Naive thymus-derived CD4-positive, alpha-beta T cell (primary cell): ENCODE measurements at regions of chr3 and their contacts with region 1.

Region 1: DNA sequence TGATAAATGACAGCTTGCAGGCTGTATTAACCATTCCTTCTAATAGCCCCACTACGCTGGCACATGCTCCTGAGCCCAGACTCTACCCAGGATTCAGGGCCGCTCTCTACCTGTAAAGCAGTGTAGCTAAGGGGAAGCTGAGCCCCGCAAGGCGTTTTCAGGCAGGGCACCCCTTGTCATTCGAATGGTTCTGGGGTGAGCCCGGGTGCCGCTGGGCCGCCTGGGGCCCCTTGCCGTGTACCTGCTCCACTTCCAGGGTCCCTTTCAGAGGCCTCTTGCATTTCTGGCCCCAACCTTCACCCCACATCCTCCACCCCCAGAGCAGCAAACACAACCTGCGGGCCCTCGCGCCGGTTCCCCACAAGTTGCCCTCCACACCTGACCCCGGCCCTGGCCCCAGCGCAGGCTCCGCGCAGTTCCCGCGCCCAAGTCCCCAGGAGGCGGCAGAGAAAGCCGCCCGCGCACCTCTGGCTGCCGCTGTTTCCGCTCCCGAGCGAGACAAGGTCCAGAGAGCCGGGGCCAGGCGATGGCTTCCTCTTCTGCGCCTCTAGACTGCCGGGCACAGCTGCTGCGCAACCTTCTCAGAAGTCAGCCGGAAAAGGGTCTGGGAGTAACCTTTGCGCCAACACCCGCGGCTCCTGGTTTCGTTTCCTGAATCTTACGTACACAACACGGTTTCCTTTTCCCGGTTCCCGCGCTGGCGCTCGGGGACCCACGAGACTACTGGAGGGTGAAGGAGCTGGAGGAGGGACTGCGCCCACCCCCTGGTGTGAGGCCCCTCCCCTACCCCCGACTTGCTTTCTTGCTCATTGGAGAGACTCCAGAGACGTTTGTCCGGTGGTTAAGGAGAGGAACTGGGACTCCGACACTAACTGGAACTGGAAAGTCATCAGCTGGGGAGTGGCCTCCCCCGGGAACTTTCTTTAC is at the start of gene PLSCR1:
- DNase-seq: peak; percentile 40 to 77 (median 55)
- ATAC-seq: peak; percentile 86
- H3K4me3 ChIP-seq: peak within 1 kb of the TSS; percentile 82
- H3K4me3 Mint-ChIP-seq: peak within 1 kb of the TSS; percentile 91 to 98 (median 93)
- H3K27ac ChIP-seq: peak within 1 kb of the TSS; percentile 68
- H3K27ac Mint-ChIP-seq: peak within 1 kb of the TSS; percentile 29 to 97 (median 86)
- H3K4me1 ChIP-seq: peaks cover 12 to 28% of the 10 kb centered on the region in 2 donors
- H3K4me1 Mint-ChIP-seq: peaks cover 36 to 73% (median 57%) of the 10 kb centered on the region in 7 donors
- H3K27me3 ChIP-seq: no peaks in the 10 kb centered on the region
- H3K27me3 Mint-ChIP-seq: no peaks in the 10 kb centered on the region
- total RNA-seq, gene PLSCR1: 14.6 to 174 (median 16.1) TPM

Region 2: DNA sequence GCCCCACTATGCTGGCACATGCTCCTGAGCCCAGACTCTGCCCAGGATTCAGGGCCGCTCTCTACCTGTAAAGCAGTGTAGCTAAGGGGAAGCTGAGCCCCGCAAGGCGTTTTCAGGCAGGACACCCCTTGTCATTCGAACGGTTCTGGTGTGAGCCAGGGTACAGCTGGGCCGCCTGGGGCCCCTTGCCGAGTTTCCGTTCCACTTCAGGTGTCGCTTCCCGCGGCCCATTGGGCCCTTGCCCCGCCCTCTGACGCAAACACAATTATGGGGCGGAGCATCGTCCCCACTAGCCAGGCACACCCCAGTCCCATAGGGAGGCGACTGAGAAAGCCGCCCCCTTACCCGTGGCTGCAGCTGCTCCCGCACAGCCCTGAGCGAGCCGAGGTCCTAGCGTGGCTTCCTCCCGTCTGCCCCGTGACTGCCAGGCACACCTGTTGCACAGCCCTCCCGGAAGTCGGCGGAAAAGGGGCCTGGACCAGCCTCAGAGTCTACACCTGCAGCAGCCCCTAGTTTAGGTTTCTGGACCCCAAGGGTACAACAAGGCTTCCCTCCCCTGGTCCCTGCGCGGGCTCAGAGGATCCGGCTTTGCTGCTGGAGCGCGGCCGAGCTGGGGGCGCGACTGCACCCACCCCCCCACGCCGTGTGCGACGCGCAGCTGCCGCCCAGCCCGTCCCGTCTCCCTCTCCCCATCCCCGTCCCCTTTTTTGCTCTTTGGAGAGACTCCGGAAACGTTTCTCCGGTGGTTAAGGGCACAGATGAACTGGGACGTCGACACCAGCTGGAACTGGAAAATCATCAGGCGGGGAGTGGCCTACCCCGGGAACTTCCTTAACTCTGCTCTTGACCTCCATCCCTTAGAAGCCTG is 74.9 kb before region 1 on chr3 and contains the start of gene PLSCR2:
- CTCF ChIA-PET with region 1: no interaction called
- POLR2A ChIA-PET with region 1: interaction called, 3 read pairs
- intact Hi-C with region 1: loop called (anchors 1 to 2 kb)
- DNase-seq: peak; percentile 56 to 79 (median 74)
- ATAC-seq: peak; percentile 97
- H3K4me3 ChIP-seq: peak within 1 kb of the TSS; percentile 73
- H3K4me3 Mint-ChIP-seq: peak within 1 kb of the TSS; percentile 75 to 88 (median 82)
- H3K27ac ChIP-seq: peak within 1 kb of the TSS; percentile 69
- H3K27ac Mint-ChIP-seq: peak within 1 kb of the TSS; percentile 60 to 88 (median 81)
- H3K4me1 ChIP-seq: no peaks in the 10 kb centered on the region
- H3K4me1 Mint-ChIP-seq: peaks cover 0 to 18% (median 4%) of the 10 kb centered on the region in 7 donors
- H3K27me3 ChIP-seq: no peaks in the 10 kb centered on the region
- H3K27me3 Mint-ChIP-seq: peaks cover 0 to 9% (median 5%) of the 10 kb centered on the region in 5 donors
- total RNA-seq, gene PLSCR2: 0.44 to 0.89 (median 0.72) TPM in 4 of 5 experiments, not detected in the other

Region 3: DNA sequence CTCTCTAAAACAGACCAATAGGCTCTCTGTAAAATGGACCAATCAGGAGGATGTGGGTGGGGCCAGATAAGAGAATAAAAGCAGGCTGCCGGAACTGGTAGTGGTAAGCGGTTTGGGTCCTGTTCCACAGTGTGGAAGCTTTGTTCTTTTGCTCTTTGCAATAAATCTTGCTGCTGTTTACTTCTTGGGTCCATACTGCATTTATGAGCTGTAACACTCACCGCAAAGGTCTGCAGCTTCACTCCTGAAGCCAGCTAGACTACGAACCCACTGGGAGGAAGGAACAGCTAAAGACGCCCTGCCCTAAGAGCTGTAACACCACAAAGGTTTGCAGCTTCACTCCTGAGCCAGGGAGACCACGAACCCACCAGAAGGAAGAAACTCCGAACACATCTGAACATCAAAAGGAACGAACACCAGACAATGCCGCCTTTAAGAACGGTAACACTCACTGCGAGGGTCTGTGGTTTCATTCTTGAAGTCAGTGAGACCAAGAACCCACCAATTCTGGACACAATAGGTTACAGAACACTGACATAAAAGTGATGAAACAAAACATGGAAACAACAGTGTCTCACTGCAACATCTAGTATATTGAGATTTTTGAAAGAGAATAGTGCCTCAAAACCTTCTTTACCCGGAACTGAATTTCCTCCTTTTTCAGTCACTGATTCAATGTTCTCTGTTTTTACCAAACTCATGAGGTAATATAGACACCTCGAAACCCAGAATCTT is 46.1 kb before region 1 on chr3:
- CTCF ChIA-PET with region 1: no interaction called
- POLR2A ChIA-PET with region 1: no interaction called
- intact Hi-C with region 1: loop called (anchors 2 to 5 kb)
- DNase-seq: peak in 7 of 9 donors; percentile 48 to 74 (median 60)
- ATAC-seq: peak; percentile 67
- H3K4me3 ChIP-seq: peak overlapping the region; percentile 43
- H3K4me3 Mint-ChIP-seq: peak overlapping the region; percentile 77 to 95 (median 85)
- H3K27ac ChIP-seq: peak overlapping the region; percentile 39
- H3K27ac Mint-ChIP-seq: peak overlapping the region; percentile 79 to 95 (median 82)
- H3K4me1 ChIP-seq: no peaks in the 10 kb centered on the region
- H3K4me1 Mint-ChIP-seq: peaks cover 0 to 22% (median 18%) of the 10 kb centered on the region in 7 donors
- H3K27me3 ChIP-seq: no peaks in the 10 kb centered on the region
- H3K27me3 Mint-ChIP-seq: peaks cover 0 to 5% (median under 1%) of the 10 kb centered on the region in 5 donors

Region 4: DNA sequence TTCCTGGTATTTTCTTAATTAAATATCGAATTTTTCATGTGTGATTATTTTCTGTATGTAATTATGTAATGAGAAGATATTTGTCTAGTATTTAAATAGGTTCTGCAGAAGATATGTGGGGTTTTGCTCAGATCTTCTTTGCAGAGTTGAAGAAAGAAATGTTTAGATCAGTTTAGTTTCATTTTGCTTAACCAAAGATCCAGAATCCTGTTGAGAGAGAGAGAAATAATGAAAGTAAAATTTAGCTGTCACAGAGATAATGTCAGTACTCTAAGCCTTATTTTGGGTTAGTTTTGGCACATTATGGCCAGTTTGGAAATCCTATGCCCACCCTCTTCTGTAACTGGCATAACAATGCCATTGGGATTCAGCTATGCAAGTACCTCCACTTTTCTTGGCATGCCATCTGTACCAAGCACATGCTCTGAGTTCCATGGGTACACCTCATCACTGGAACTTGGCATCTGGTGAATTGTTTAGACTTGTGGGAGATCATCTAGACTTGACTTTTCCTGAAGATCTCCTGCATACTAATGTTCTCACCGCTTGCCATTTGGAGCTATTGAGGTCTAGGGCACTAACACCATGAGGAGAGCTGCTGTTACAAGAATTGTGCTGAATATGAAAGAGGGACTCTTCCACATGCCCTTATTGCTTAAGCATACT is 30.7 kb before region 1 on chr3:
- CTCF ChIA-PET with region 1: interaction called, 3 read pairs
- POLR2A ChIA-PET with region 1: no interaction called
- intact Hi-C with region 1: loop called in 1 of 2 experiments (anchors 2 kb)
- DNase-seq: peak in 1 of 9 donors; percentile 10
- ATAC-seq: no peak
- H3K4me3 ChIP-seq: no peak overlapping the region
- H3K4me3 Mint-ChIP-seq: peak overlapping the region in 8 of 10 donors; percentile 3 to 72 (median 32)
- H3K27ac ChIP-seq: peak overlapping the region; percentile 28
- H3K27ac Mint-ChIP-seq: peak overlapping the region; percentile 3 to 94 (median 70)
- H3K4me1 ChIP-seq: no peaks in the 10 kb centered on the region
- H3K4me1 Mint-ChIP-seq: peaks cover 8 to 38% (median 24%) of the 10 kb centered on the region in 7 donors
- H3K27me3 ChIP-seq: no peaks in the 10 kb centered on the region
- H3K27me3 Mint-ChIP-seq: no peaks in the 10 kb centered on the region

Region 5: GRCh38 chr3:146577662-146578061 is 33.4 kb after region 1 on chr3:
- CTCF ChIA-PET with region 1: no interaction called
- POLR2A ChIA-PET with region 1: no interaction called
- intact Hi-C with region 1: loop called in 1 of 2 experiments (anchors 2 kb)
- DNase-seq: peak in 6 of 9 donors; percentile 19 to 46 (median 34)
- ATAC-seq: peak; percentile 67
- H3K4me3 ChIP-seq: no peak overlapping the region
- H3K4me3 Mint-ChIP-seq: no peak overlapping the region
- H3K27ac ChIP-seq: no peak overlapping the region
- H3K27ac Mint-ChIP-seq: no peak overlapping the region
- H3K4me1 ChIP-seq: no peaks in the 10 kb centered on the region
- H3K4me1 Mint-ChIP-seq: peaks cover 0 to 5% (median 0%) of the 10 kb centered on the region in 7 donors
- H3K27me3 ChIP-seq: no peaks in the 10 kb centered on the region
- H3K27me3 Mint-ChIP-seq: peaks cover 0 to 23% (median 3%) of the 10 kb centered on the region in 5 donors